PC-9 (cell line): ENCODE measurements at regions of chr3 and their contacts with region 1.

Region 1: GRCh38 chr3:182258538-182259177 is 534.6 kb upstream of the ATP11B start:
- DNase-seq: peak; percentile 24 to 55
- H3K4me3 ChIP-seq: no peak overlapping the region
- H3K27ac ChIP-seq: no peak overlapping the region
- H3K4me1 ChIP-seq: no peaks in the 10 kb centered on the region
- H3K27me3 ChIP-seq: no peaks in the 10 kb centered on the region
- CTCF ChIP-seq: peak; percentile 93

Region 2: GRCh38 chr3:181210275-181210674 is 1048.4 kb before region 1 on chr3:
- CTCF ChIA-PET with region 1: no interaction called
- POLR2A ChIA-PET with region 1: no interaction called
- intact Hi-C with region 1: loop called (anchors 10 kb)
- DNase-seq: no peak
- H3K4me3 ChIP-seq: no peak overlapping the region
- H3K27ac ChIP-seq: no peak overlapping the region
- H3K4me1 ChIP-seq: no peaks in the 10 kb centered on the region
- H3K27me3 ChIP-seq: no peaks in the 10 kb centered on the region
- CTCF ChIP-seq: peak; percentile 72

Region 3: GRCh38 chr3:181326637-181327223 is 931.9 kb before region 1 on chr3:
- CTCF ChIA-PET with region 1: no interaction called
- POLR2A ChIA-PET with region 1: no interaction called
- intact Hi-C with region 1: loop called (anchors 5 kb)
- DNase-seq: no peak
- H3K4me3 ChIP-seq: no peak overlapping the region
- H3K27ac ChIP-seq: no peak overlapping the region
- H3K4me1 ChIP-seq: no peaks in the 10 kb centered on the region
- H3K27me3 ChIP-seq: no peaks in the 10 kb centered on the region; the same call in 1 of the 2 replicates
- CTCF ChIP-seq: peak; percentile 94

Region 4: DNA sequence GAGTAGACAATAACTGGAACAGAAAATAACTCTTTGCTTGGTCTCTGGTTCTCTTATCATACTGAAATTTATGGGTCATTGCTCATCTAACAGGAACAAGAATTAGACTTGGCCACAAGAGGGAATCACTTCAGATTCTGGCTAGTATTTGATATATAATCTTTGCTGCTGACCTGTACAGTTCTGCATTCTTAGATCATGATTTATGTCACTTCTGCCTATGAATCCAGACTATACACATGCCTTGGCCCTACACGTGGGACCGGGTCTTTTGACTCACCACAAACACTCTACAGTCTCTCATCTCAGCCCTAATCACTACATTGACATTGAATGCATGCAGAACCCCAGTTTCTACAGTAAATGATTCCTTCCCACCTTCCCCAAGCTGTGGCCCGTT is 709.4 kb before region 1 on chr3:
- CTCF ChIA-PET with region 1: no interaction called
- POLR2A ChIA-PET with region 1: no interaction called
- intact Hi-C with region 1: no loop called
- DNase-seq: no peak
- H3K4me3 ChIP-seq: no peak overlapping the region
- H3K27ac ChIP-seq: no peak overlapping the region
- H3K4me1 ChIP-seq: no peaks in the 10 kb centered on the region
- H3K27me3 ChIP-seq: no peaks in the 10 kb centered on the region
- CTCF ChIP-seq: no peak

Region 5: GRCh38 chr3:181851059-181851458 is 407.6 kb before region 1 on chr3:
- CTCF ChIA-PET with region 1: no interaction called
- POLR2A ChIA-PET with region 1: no interaction called
- intact Hi-C with region 1: no loop called
- DNase-seq: peak; percentile 60 to 98
- H3K4me3 ChIP-seq: no peak overlapping the region; the same call in 1 of the 2 replicates
- H3K27ac ChIP-seq: peak overlapping the region; percentile 88
- H3K4me1 ChIP-seq: peaks cover 45% of the 10 kb centered on the region
- H3K27me3 ChIP-seq: no peaks in the 10 kb centered on the region
- CTCF ChIP-seq: no peak

Region 6: GRCh38 chr3:181899702-181900101 is 359.0 kb before region 1 on chr3:
- CTCF ChIA-PET with region 1: no interaction called
- POLR2A ChIA-PET with region 1: no interaction called
- intact Hi-C with region 1: loop called (anchors 1 kb)
- DNase-seq: peak; percentile 64 to 66
- H3K4me3 ChIP-seq: no peak overlapping the region
- H3K27ac ChIP-seq: no peak overlapping the region
- H3K4me1 ChIP-seq: no peaks in the 10 kb centered on the region
- H3K27me3 ChIP-seq: no peaks in the 10 kb centered on the region
- CTCF ChIP-seq: no peak

Region 7: GRCh38 chr3:181941250-181941649 is 317.4 kb before region 1 on chr3:
- CTCF ChIA-PET with region 1: no interaction called
- POLR2A ChIA-PET with region 1: interaction called, 14 read pairs
- intact Hi-C with region 1: loop called (anchors 5 kb)
- DNase-seq: no peak
- H3K4me3 ChIP-seq: no peak overlapping the region
- H3K27ac ChIP-seq: no peak overlapping the region
- H3K4me1 ChIP-seq: no peaks in the 10 kb centered on the region
- H3K27me3 ChIP-seq: no peaks in the 10 kb centered on the region
- CTCF ChIP-seq: no peak

Region 8: DNA sequence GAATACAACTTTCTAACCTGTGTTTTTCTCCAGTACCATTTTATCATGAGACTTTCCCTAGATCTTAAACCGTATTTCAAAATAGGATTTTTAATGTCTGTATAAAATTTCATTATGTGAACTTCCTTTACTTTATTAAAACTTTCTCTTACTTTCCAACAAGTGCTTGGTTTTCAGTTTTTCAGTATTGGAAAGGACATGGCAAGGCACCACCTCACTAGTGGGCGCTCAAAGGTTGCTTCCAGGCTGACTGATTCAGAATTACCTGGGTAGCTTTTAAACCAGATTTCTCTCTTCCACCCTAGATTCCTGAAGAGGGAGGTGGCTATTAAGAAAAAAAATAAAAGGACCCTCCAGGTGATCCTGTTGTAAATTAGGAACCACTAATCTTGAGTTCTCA is 310.4 kb before region 1 on chr3:
- CTCF ChIA-PET with region 1: no interaction called
- POLR2A ChIA-PET with region 1: interaction called, 14 read pairs
- intact Hi-C with region 1: loop called (anchors 5 kb)
- DNase-seq: peak in 1 of 2 experiments; percentile 11
- H3K4me3 ChIP-seq: no peak overlapping the region
- H3K27ac ChIP-seq: no peak overlapping the region
- H3K4me1 ChIP-seq: no peaks in the 10 kb centered on the region
- H3K27me3 ChIP-seq: no peaks in the 10 kb centered on the region
- CTCF ChIP-seq: peak; percentile 59; the same call in 1 of the 2 replicates

Region 9: DNA sequence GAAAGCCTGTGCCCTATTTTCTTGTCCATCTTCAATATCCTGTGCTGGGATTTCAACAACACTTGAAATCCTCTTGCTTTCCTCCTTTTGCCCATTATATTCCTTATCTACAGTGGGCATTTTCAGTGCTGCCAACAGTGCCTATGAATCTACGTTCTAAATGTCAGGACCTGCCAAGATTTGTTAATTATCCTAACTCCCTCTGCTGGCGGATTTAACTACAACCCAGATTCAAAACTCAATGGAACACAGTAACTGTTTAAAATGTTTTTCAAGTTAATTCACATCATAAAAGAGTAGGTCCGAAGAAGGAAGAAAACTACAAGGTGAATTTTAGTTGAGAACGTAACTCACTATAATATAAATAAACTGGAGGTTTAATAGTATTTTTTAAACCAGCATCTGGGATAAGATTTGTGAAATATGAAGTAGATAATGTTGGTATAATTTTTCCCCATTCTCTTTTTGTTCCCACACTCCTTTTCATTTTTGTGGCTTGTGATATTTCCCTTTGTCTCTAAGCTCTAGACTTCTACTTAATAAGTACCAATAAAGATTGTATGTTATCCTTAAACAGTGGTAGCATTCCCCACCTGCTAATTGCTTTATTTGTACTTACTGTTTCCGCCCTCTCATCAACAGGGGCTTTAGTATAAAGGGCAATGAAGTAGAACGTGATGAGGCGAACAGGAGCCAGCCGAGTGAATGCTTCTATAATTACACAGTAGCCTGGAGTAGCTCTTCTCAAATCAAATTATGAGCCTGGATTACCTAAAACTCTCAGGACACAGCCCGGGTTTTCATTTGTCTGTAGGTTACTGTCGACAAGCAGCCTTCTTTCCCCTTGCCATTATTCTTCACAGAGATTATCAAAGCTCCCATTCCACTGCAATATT is 232.2 kb after region 1 on chr3:
- CTCF ChIA-PET with region 1: no interaction called
- POLR2A ChIA-PET with region 1: no interaction called
- intact Hi-C with region 1: loop called (anchors 2 kb)
- DNase-seq: peak; percentile 12 to 37
- H3K4me3 ChIP-seq: no peak overlapping the region
- H3K27ac ChIP-seq: no peak overlapping the region
- H3K4me1 ChIP-seq: peaks cover 3% of the 10 kb centered on the region; the same call in 1 of the 2 replicates
- H3K27me3 ChIP-seq: no peaks in the 10 kb centered on the region
- CTCF ChIP-seq: peak; percentile 74